Vagina (tissue), 2 donors: ENCODE measurements at regions of chr4 and their contacts with region 1.

Region 1: GRCh38 chr4:73069338-73070073 is at the start of gene COX18:
- DNase-seq: peak; percentile 98
- H3K4me3 ChIP-seq: peak within 1 kb of the TSS; percentile 72 to 80
- H3K27ac ChIP-seq: peak within 1 kb of the TSS; percentile 87
- H3K4me1 ChIP-seq: no peaks in the 10 kb centered on the region
- H3K27me3 ChIP-seq: no peaks in the 10 kb centered on the region
- CTCF ChIP-seq: peak in 1 of 3 experiments; percentile 11
- POLR2A ChIP-seq: peak in 1 of 2 donors; percentile 59
- total RNA-seq, gene COX18: 12.8 TPM

Region 2: GRCh38 chr4:73080789-73081188 is 11.3 kb after region 1 on chr4:
- intact Hi-C with region 1: no loop called
- DNase-seq: no peak
- H3K4me3 ChIP-seq: no peak overlapping the region
- H3K27ac ChIP-seq: no peak overlapping the region
- H3K4me1 ChIP-seq: peaks cover 9% of the 10 kb centered on the region
- H3K27me3 ChIP-seq: no peaks in the 10 kb centered on the region
- CTCF ChIP-seq: no peak
- POLR2A ChIP-seq: no peak

Region 3: GRCh38 chr4:73193155-73193554 is 123.6 kb after region 1 on chr4:
- intact Hi-C with region 1: no loop called
- DNase-seq: no peak
- H3K4me3 ChIP-seq: no peak overlapping the region
- H3K27ac ChIP-seq: no peak overlapping the region
- H3K4me1 ChIP-seq: no peaks in the 10 kb centered on the region
- H3K27me3 ChIP-seq: no peaks in the 10 kb centered on the region
- CTCF ChIP-seq: no peak
- POLR2A ChIP-seq: no peak

Region 4: GRCh38 chr4:73258686-73259570 is 189.4 kb after region 1 on chr4 and contains the start of gene ANKRD17:
- intact Hi-C with region 1: loop called (anchors 2 kb)
- DNase-seq: peak in 1 of 2 donors; percentile 95
- H3K4me3 ChIP-seq: peak within 1 kb of the TSS; percentile 90 to 97
- H3K27ac ChIP-seq: peak within 1 kb of the TSS; percentile 96
- H3K4me1 ChIP-seq: peaks cover 55% of the 10 kb centered on the region
- H3K27me3 ChIP-seq: no peaks in the 10 kb centered on the region
- CTCF ChIP-seq: peak in 2 of 3 experiments; percentile 2 to 33
- POLR2A ChIP-seq: peak in 1 of 2 donors; percentile 53
- total RNA-seq, gene ANKRD17: 55.5 TPM